Transverse colon (tissue), 4 donors: ENCODE measurements at regions of chr9 and their contacts with region 1.

Region 1: GRCh38 chr9:6566409-6567139 is 79.0 kb downstream of the GLDC start:
- DNase-seq: no peak
- H3K4me3 ChIP-seq: no peak overlapping the region
- H3K27ac ChIP-seq: no peak overlapping the region
- H3K4me1 ChIP-seq: no peaks in the 10 kb centered on the region
- H3K27me3 ChIP-seq: no peaks in the 10 kb centered on the region
- CTCF ChIP-seq: no peak
- EP300 ChIP-seq: no peak
- POLR2A ChIP-seq: no peak

Region 2: GRCh38 chr9:6243746-6244145 is 322.8 kb before region 1 on chr9:
- in situ Hi-C with region 1: no loop called
- intact Hi-C with region 1: no loop called
- DNase-seq: no peak
- H3K4me3 ChIP-seq: no peak overlapping the region
- H3K27ac ChIP-seq: no peak overlapping the region
- H3K4me1 ChIP-seq: peaks cover 0 to 18% (median 5%) of the 10 kb centered on the region in 4 donors
- H3K27me3 ChIP-seq: no peaks in the 10 kb centered on the region
- CTCF ChIP-seq: no peak
- EP300 ChIP-seq: no peak
- POLR2A ChIP-seq: no peak

Region 3: DNA sequence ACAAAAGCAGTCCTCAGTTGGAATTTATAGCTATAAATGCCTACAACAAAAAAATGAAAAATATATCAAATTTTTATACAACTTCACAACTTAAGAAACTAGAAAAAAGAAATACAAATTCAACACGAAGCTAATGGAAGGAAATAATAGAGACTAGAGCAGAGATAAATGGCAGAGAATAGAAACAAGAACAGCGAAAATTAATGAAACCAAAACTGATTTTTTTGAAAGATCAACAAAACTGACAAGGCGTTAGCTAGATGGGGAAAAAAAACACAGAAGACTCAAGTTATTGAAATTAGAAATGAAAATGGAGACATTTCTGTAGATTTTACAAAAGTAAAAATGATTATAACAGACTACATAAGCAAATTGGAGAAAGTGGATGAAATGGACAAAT is 217.8 kb before region 1 on chr9:
- in situ Hi-C with region 1: loop called (anchors 5 to 10 kb)
- intact Hi-C with region 1: no loop called
- DNase-seq: no peak
- H3K4me3 ChIP-seq: no peak overlapping the region
- H3K27ac ChIP-seq: no peak overlapping the region
- H3K4me1 ChIP-seq: no peaks in the 10 kb centered on the region
- H3K27me3 ChIP-seq: no peaks in the 10 kb centered on the region
- CTCF ChIP-seq: no peak
- EP300 ChIP-seq: no peak
- POLR2A ChIP-seq: no peak

Region 4: DNA sequence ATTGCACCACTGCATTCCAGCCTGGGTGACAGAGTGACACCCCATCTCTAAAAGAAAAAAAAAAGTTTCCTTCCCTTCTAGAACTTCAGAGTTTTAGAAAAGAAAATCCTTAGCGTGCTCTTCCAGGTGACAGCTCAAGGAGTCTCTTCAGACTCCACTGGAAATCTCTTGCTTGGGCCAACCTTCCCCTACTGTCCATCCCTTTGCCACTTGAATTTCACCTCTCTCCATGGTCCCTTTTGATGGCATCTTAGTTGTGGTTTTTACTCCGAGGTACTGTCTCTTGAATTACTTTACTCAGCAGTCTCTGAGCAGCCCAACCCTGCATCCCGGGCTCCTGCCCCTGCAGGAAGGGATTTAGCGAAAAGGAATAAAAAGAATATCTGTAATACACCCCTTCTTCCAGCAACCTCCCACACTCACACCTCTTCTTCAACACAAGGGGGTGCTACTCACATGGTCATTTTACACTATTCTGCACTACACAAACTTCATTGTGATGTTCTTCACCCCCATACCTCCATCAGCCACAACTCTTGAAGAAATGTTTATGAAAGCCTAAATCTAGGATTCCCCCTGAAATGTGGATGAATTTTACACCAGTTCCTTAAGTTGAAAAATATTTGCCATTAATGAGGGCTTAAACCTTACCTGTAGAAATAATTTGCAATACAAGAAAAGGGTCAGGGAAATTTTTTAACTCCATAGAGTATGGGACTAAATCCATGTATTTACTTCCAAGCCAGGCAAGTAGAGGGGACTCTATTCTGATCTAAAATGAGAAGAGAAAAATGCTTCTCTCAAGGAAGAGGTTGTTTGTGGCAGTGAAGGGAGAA is 212.5 kb before region 1 on chr9:
- in situ Hi-C with region 1: loop called (anchors 5 to 10 kb)
- intact Hi-C with region 1: loop called (anchors 1 kb)
- DNase-seq: no peak
- H3K4me3 ChIP-seq: no peak overlapping the region
- H3K27ac ChIP-seq: no peak overlapping the region
- H3K4me1 ChIP-seq: no peaks in the 10 kb centered on the region
- H3K27me3 ChIP-seq: no peaks in the 10 kb centered on the region
- CTCF ChIP-seq: peak; percentile 63 to 80 (median 77)
- EP300 ChIP-seq: no peak
- POLR2A ChIP-seq: no peak

Region 5: GRCh38 chr9:6412487-6413364 is 153.8 kb before region 1 on chr9 and contains the start of gene UHRF2:
- in situ Hi-C with region 1: no loop called
- intact Hi-C with region 1: loop called (anchors 5 kb)
- DNase-seq: peak; percentile 99
- H3K4me3 ChIP-seq: peak within 1 kb of the TSS; percentile 39 to 98 (median 80)
- H3K27ac ChIP-seq: peak within 1 kb of the TSS; percentile 82 to 94 (median 88)
- H3K4me1 ChIP-seq: peaks cover 8 to 35% (median 16%) of the 10 kb centered on the region in 4 donors
- H3K27me3 ChIP-seq: no peaks in the 10 kb centered on the region
- CTCF ChIP-seq: no peak
- EP300 ChIP-seq: no peak
- POLR2A ChIP-seq: peak; percentile 85
- total RNA-seq, gene UHRF2: 40.8 to 64.0 (median 51.4) TPM

Region 6: GRCh38 chr9:6667633-6668280 is 101.2 kb after region 1 on chr9:
- in situ Hi-C with region 1: no loop called
- intact Hi-C with region 1: no loop called
- DNase-seq: no peak
- H3K4me3 ChIP-seq: no peak overlapping the region
- H3K27ac ChIP-seq: no peak overlapping the region
- H3K4me1 ChIP-seq: peaks cover 0 to 15% (median 1%) of the 10 kb centered on the region in 4 donors
- H3K27me3 ChIP-seq: no peaks in the 10 kb centered on the region
- CTCF ChIP-seq: peak in 4 of 5 experiments; percentile 38 to 50 (median 43)
- EP300 ChIP-seq: no peak
- POLR2A ChIP-seq: no peak

Region 7: DNA sequence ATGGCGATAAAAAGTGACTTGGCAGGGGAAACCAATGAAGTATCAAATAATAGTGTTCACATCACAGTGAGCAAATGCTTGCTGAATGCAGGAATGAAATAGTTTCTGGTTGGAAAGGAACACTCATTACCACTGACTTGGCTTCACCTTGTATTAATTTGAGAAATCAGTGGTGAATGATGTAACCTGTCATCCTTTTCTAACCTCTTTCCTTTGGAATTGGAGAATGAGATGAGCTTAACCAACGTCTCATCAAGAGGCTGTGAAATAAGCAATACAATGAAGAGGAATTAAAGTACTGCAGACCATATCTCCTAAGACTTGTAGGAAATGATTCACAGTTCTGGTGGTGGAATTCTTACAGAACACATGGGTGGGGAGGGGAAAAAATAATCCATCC is 1040.8 kb after region 1 on chr9:
- in situ Hi-C with region 1: no loop called
- intact Hi-C with region 1: no loop called
- DNase-seq: no peak
- H3K4me3 ChIP-seq: no peak overlapping the region
- H3K27ac ChIP-seq: no peak overlapping the region
- H3K4me1 ChIP-seq: no peaks in the 10 kb centered on the region
- H3K27me3 ChIP-seq: no peaks in the 10 kb centered on the region
- CTCF ChIP-seq: no peak
- EP300 ChIP-seq: no peak
- POLR2A ChIP-seq: no peak